ENCODE measurements at regions of chr3 and their contacts with region 1.

Region 1: GRCh38 chr3:133384331-133385027 is 15.4 kb upstream of the BFSP2 start:
- DNase-seq: peak; percentile 70 to 93
- H3K4me3 ChIP-seq: no peak overlapping the region
- H3K27ac ChIP-seq: no peak overlapping the region
- H3K4me1 ChIP-seq: peaks cover 0 to 10% (median 7%) of the 10 kb centered on the region in 4 donors
- H3K27me3 ChIP-seq: no peaks in the 10 kb centered on the region
- CTCF ChIP-seq: peak in 5 of 7 experiments; percentile 54 to 78 (median 64)
- EP300 ChIP-seq: no peak
- POLR2A ChIP-seq: no peak

Region 2: GRCh38 chr3:132730891-132731580 is 653.4 kb before region 1 on chr3:
- intact Hi-C with region 1: loop called (anchors 10 kb)
- DNase-seq: peak in 1 of 2 donors; percentile 81
- H3K4me3 ChIP-seq: no peak overlapping the region
- H3K27ac ChIP-seq: no peak overlapping the region
- H3K4me1 ChIP-seq: peaks cover 0 to 6% (median 2%) of the 10 kb centered on the region in 4 donors
- H3K27me3 ChIP-seq: no peaks in the 10 kb centered on the region
- CTCF ChIP-seq: peak in 4 of 7 experiments; percentile 16 to 26 (median 22)
- EP300 ChIP-seq: no peak
- POLR2A ChIP-seq: no peak

Region 3: DNA sequence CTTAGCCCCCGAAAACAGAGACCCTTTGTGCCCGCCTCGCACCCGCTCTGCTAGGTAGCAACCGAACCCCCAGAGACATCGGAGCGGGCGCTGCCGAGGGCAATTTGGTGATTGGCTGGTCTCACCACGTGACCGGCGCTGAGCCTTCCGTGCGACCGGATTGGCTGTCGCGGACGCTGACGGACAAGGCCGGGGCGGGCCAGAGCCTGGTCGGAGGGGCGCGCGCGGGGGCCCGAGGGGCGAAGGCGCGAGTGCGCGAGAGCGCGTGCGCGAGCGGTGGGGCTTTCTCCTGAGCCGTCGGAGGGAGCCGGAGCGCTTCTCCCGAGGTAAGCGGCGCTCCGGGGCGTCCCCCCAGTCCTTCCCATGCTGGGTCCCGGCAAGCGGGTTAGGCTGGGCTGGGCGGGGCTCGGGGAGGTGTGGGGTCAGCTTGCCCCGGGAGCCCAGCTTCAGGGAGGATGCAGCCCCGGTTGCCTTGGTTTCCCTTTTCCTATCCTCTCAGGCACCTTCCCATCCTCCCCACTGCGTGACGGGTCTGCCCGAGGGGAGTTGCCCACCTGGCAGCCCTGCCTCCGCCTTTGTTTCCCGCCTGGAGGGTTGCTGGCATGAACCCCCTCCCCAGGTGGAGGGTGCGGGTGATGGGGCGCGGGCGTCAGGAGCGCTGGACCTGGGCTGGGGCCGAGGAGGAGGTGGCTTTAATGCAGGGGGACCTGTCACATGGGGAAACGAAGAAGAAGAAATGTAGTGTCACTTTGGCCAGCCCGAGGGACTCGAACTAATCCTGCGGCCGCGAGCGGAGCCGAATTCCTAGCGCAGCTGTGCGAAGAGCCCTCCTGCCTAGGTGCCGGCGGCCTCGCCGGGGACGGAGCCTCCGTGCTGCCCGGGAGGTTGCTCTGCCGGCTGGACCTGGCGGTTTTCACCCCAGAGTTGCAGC is 346.1 kb before region 1 on chr3 and contains the start of gene TMEM108:
- intact Hi-C with region 1: loop called (anchors 5 kb)
- DNase-seq: peak; percentile 81 to 95
- H3K4me3 ChIP-seq: peak within 1 kb of the TSS; percentile 58 to 72 (median 64)
- H3K27ac ChIP-seq: peak within 1 kb of the TSS in 3 of 5 donors; percentile 2 to 40 (median 28)
- H3K4me1 ChIP-seq: peaks cover 7 to 45% (median 34%) of the 10 kb centered on the region in 4 donors
- H3K27me3 ChIP-seq: peaks cover 0 to 36% (median 25%) of the 10 kb centered on the region in 3 donors
- CTCF ChIP-seq: no peak
- EP300 ChIP-seq: no peak
- POLR2A ChIP-seq: no peak
- total RNA-seq, gene TMEM108: 0.43 to 1.3 (median 0.92) TPM in 3 of 5 donors, not detected in the others

Region 4: GRCh38 chr3:133448478-133449122 is 64.1 kb after region 1 on chr3:
- intact Hi-C with region 1: no loop called
- DNase-seq: peak in 1 of 2 donors; percentile 28
- H3K4me3 ChIP-seq: no peak overlapping the region
- H3K27ac ChIP-seq: peak overlapping the region in 2 of 5 donors; percentile 18 to 56
- H3K4me1 ChIP-seq: peaks cover 3 to 35% (median 19%) of the 10 kb centered on the region in 4 donors
- H3K27me3 ChIP-seq: no peaks in the 10 kb centered on the region
- CTCF ChIP-seq: no peak
- EP300 ChIP-seq: no peak
- POLR2A ChIP-seq: no peak